CD4-positive, alpha-beta memory T cell (primary cell): ENCODE measurements at regions of chr6 and their contacts with region 1.

Region 1: GRCh38 chr6:593139-593906 is 63.6 kb downstream of the HUS1B start:
- DNase-seq: peak; percentile 52 to 65 (median 59)
- H3K4me3 ChIP-seq: no peak overlapping the region
- H3K4me3 Mint-ChIP-seq: no peak overlapping the region
- H3K27ac ChIP-seq: no peak overlapping the region
- H3K27ac Mint-ChIP-seq: peak overlapping the region in 2 of 7 donors; percentile 8 to 13
- H3K4me1 ChIP-seq: no peaks in the 10 kb centered on the region
- H3K4me1 Mint-ChIP-seq: peaks cover 0 to 4% (median 3%) of the 10 kb centered on the region in 4 donors
- H3K27me3 ChIP-seq: no peaks in the 10 kb centered on the region
- H3K27me3 Mint-ChIP-seq: no peaks in the 10 kb centered on the region

Region 2: GRCh38 chr6:188821-189655 is 404.3 kb before region 1 on chr6:
- CTCF ChIA-PET with region 1: interaction called, 8 read pairs
- POLR2A ChIA-PET with region 1: no interaction called
- intact Hi-C with region 1: loop called (anchors 2 kb)
- DNase-seq: peak; percentile 70 to 74 (median 71)
- H3K4me3 ChIP-seq: no peak overlapping the region
- H3K4me3 Mint-ChIP-seq: peak overlapping the region in 2 of 8 donors; percentile 22 to 26
- H3K27ac ChIP-seq: no peak overlapping the region
- H3K27ac Mint-ChIP-seq: peak overlapping the region in 3 of 7 donors; percentile 35 to 43 (median 36)
- H3K4me1 ChIP-seq: peaks cover 19% of the 10 kb centered on the region
- H3K4me1 Mint-ChIP-seq: peaks cover 23 to 37% (median 31%) of the 10 kb centered on the region in 4 donors
- H3K27me3 ChIP-seq: no peaks in the 10 kb centered on the region
- H3K27me3 Mint-ChIP-seq: no peaks in the 10 kb centered on the region

Region 3: GRCh38 chr6:610882-611281 is 17.6 kb after region 1 on chr6:
- CTCF ChIA-PET with region 1: interaction called, 17 read pairs
- POLR2A ChIA-PET with region 1: interaction called, 3 read pairs
- intact Hi-C with region 1: no loop called
- DNase-seq: no peak
- H3K4me3 ChIP-seq: no peak overlapping the region
- H3K4me3 Mint-ChIP-seq: no peak overlapping the region
- H3K27ac ChIP-seq: no peak overlapping the region
- H3K27ac Mint-ChIP-seq: peak overlapping the region in 4 of 7 donors; percentile 31 to 77 (median 70)
- H3K4me1 ChIP-seq: no peaks in the 10 kb centered on the region
- H3K4me1 Mint-ChIP-seq: peaks cover 0 to 3% (median under 1%) of the 10 kb centered on the region in 4 donors
- H3K27me3 ChIP-seq: no peaks in the 10 kb centered on the region
- H3K27me3 Mint-ChIP-seq: no peaks in the 10 kb centered on the region

Region 4: DNA sequence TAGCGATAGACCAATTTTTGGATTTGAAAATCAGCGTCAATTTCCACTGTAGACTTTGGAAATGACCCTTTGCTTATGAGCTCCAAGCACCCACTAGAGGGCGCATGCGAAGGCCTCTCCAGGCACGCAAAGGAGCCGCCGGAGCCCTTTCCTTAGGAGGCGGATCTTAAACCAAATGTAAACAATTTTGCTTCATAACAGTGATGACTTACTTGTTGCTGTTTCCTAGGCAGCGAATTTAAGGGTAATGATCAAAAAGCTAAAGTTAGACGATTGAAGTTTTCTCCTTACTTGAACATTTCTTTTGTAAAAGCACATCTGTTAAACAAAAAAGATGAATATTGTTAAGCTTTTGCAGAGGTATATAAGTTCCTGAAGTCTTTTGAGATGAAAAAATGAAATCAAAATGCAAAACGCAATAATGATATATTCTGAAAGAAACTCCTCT is 128.8 kb after region 1 on chr6:
- CTCF ChIA-PET with region 1: interaction called, 24 read pairs
- POLR2A ChIA-PET with region 1: no interaction called
- intact Hi-C with region 1: loop called (anchors 2 kb)
- DNase-seq: peak; percentile 55 to 69 (median 58)
- H3K4me3 ChIP-seq: no peak overlapping the region
- H3K4me3 Mint-ChIP-seq: peak overlapping the region in 2 of 8 donors; percentile 7 to 52
- H3K27ac ChIP-seq: no peak overlapping the region
- H3K27ac Mint-ChIP-seq: no peak overlapping the region
- H3K4me1 ChIP-seq: peaks cover 7% of the 10 kb centered on the region
- H3K4me1 Mint-ChIP-seq: peaks cover 0 to 9% (median 4%) of the 10 kb centered on the region in 4 donors
- H3K27me3 ChIP-seq: no peaks in the 10 kb centered on the region
- H3K27me3 Mint-ChIP-seq: peaks cover 8 to 10% of the 10 kb centered on the region in 2 donors

Region 5: DNA sequence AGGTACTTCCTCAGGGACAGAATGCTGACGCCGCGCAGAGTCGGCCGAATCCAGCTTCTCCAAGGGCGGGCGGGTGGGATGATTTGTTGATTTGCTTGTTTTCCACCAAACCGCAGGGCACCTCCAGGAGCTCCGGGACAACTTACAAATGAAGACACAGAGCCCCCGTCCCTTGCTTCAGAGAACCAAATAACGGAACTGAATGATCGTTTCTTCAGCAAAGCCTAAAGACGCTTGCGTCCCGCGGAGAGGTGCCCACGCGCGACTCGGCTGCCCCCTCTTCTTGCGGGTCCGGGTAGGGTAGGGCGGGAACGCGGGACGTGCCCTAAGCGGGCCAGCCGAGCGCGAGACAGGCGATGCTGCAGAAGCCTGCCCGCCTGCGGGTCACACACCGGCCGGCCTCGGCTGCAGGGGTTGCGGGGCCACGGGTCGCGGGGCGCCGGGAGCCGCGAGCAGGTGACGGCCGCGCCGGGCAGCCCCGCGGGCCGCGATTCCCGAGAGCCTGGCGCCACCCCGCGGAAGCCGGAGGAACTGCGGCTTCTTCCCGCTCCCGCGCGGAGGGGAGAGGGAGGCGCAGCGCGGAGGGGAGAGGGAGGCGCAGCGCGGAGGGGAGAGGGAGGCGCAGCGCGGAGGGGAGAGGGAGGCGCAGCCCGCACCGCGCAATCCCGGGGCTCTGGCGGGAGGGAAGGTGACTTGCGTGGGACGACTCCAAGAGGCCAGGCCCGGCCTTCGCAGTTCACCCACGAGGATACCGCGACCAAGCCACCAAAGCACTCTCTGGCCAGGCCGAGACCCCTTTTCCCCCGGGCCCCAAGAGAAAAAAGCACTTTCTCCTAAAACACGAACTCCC is 788.4 kb after region 1 on chr6:
- CTCF ChIA-PET with region 1: interaction called, 4 read pairs
- POLR2A ChIA-PET with region 1: no interaction called
- intact Hi-C with region 1: loop called (anchors 1 kb)
- DNase-seq: peak in 4 of 5 donors; percentile 36 to 57 (median 48)
- H3K4me3 ChIP-seq: no peak overlapping the region
- H3K4me3 Mint-ChIP-seq: peak overlapping the region in 6 of 8 donors; percentile 21 to 74 (median 55)
- H3K27ac ChIP-seq: no peak overlapping the region
- H3K27ac Mint-ChIP-seq: no peak overlapping the region
- H3K4me1 ChIP-seq: peaks cover 38% of the 10 kb centered on the region
- H3K4me1 Mint-ChIP-seq: peaks cover 15 to 41% (median 33%) of the 10 kb centered on the region in 4 donors
- H3K27me3 ChIP-seq: peaks cover 41% of the 10 kb centered on the region
- H3K27me3 Mint-ChIP-seq: peaks cover 42 to 51% of the 10 kb centered on the region in 2 donors

Region 6: GRCh38 chr6:1436334-1437306 is 843.3 kb after region 1 on chr6:
- CTCF ChIA-PET with region 1: interaction called, 5 read pairs
- POLR2A ChIA-PET with region 1: no interaction called
- intact Hi-C with region 1: loop called (anchors 1 kb)
- DNase-seq: peak; percentile 50 to 56 (median 52)
- H3K4me3 ChIP-seq: no peak overlapping the region
- H3K4me3 Mint-ChIP-seq: no peak overlapping the region
- H3K27ac ChIP-seq: no peak overlapping the region
- H3K27ac Mint-ChIP-seq: no peak overlapping the region
- H3K4me1 ChIP-seq: no peaks in the 10 kb centered on the region
- H3K4me1 Mint-ChIP-seq: peaks cover 0 to 3% (median under 1%) of the 10 kb centered on the region in 4 donors
- H3K27me3 ChIP-seq: no peaks in the 10 kb centered on the region
- H3K27me3 Mint-ChIP-seq: peaks cover 31 to 35% of the 10 kb centered on the region in 2 donors